PC-3 (cell line): ENCODE measurements at regions of chr7 and their contacts with region 1.

Region 1: GRCh38 chr7:19713676-19714075 is 4.8 kb upstream of the POLR1F start:
- DNase-seq: peak; percentile 82
- ATAC-seq: 0 out of 2 replicates have a peak, but pooled peaks have one; percentile 31
- H3K4me3 ChIP-seq: no peak overlapping the region
- H3K27ac ChIP-seq: no peak overlapping the region
- H3K4me1 ChIP-seq: peaks cover 5% of the 10 kb centered on the region; the same call in 1 of the 2 replicates
- H3K27me3 ChIP-seq: no peaks in the 10 kb centered on the region
- CTCF ChIP-seq: peak; percentile 78

Region 2: GRCh38 chr7:20172736-20173334 is 459.2 kb after region 1 on chr7:
- CTCF ChIA-PET with region 1: interaction called, 7 read pairs
- POLR2A ChIA-PET with region 1: no interaction called
- intact Hi-C with region 1: loop called (anchors 1 kb)
- DNase-seq: peak; percentile 74
- ATAC-seq: peak; percentile 99
- H3K4me3 ChIP-seq: no peak overlapping the region
- H3K27ac ChIP-seq: no peak overlapping the region
- H3K4me1 ChIP-seq: no peaks in the 10 kb centered on the region
- H3K27me3 ChIP-seq: no peaks in the 10 kb centered on the region
- CTCF ChIP-seq: peak; percentile 77

Region 3: GRCh38 chr7:20393021-20393610 is 679.4 kb after region 1 on chr7:
- CTCF ChIA-PET with region 1: interaction called, 5 read pairs
- POLR2A ChIA-PET with region 1: no interaction called
- intact Hi-C with region 1: loop called (anchors 5 kb)
- DNase-seq: peak; percentile 74
- ATAC-seq: peak; percentile 81
- H3K4me3 ChIP-seq: peak overlapping the region; percentile 40
- H3K27ac ChIP-seq: peak overlapping the region; percentile 97
- H3K4me1 ChIP-seq: peaks cover 49% of the 10 kb centered on the region
- H3K27me3 ChIP-seq: no peaks in the 10 kb centered on the region
- CTCF ChIP-seq: no peak

Region 4: DNA sequence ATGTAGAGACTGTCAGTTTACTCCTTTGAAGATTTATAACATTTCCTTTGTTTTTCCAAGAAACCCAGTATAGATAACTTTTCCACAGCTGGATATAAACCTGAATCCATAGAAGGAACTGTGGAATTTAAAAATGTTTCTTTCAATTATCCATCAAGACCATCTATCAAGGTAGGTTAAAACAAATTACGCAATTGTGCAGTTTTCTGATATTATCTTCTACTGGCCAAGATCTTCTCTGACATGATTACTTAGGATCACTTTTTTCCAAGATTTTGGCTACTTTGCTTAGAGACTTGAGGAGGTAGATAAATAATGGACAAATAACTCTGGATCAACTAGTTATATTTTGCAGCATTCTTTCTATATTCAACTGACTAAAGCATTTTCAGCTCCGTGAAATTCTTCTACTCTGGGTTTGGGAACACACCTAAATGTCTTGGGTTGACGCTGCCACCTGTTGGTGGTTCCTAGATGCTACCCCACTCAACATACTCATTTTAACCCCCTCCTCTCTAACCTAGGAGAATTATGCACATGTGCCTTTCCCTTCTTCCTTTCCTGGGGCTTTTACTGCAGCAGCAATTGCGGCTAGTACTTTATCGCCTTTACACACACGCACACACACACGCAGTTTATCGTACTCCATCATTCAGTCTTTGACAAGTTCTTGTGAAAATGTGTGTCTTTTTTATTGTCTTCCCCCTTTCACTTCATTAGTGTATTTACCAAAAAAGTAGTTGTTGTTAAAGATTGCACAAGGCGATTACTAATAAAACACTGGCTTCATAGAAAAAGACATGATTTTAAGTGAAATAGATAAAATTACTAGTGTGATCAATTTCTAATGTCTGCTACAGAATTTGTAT is 934.5 kb after region 1 on chr7:
- CTCF ChIA-PET with region 1: interaction called, 11 read pairs
- POLR2A ChIA-PET with region 1: interaction called, 3 read pairs
- intact Hi-C with region 1: loop called (anchors 1 kb)
- DNase-seq: peak; percentile 70
- ATAC-seq: peak; percentile 95
- H3K4me3 ChIP-seq: no peak overlapping the region
- H3K27ac ChIP-seq: no peak overlapping the region
- H3K4me1 ChIP-seq: no peaks in the 10 kb centered on the region
- H3K27me3 ChIP-seq: peaks cover 10% of the 10 kb centered on the region
- CTCF ChIP-seq: peak; percentile 81

Region 5: DNA sequence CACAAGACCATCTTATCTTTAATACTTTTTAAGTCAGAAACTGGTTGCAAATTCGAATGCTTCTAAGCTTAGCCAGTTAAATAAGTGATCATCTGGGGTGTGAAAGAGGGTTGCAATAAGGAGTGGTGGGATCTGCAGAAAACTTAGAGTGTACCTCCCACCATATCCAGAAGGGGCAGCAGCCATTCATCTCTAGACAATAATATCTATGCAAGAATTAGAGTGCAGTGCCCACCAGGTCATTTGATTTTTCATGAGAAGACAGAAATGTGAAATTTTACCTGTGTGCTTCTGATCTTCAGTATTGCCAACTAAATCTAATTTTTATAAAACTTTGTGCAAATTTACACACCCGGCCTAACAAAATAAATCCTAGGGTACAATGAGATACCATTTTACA is 1587.0 kb after region 1 on chr7:
- CTCF ChIA-PET with region 1: interaction called, 11 read pairs
- POLR2A ChIA-PET with region 1: no interaction called
- intact Hi-C with region 1: no loop called
- DNase-seq: peak; percentile 3
- ATAC-seq: no peak
- H3K4me3 ChIP-seq: no peak overlapping the region
- H3K27ac ChIP-seq: no peak overlapping the region
- H3K4me1 ChIP-seq: no peaks in the 10 kb centered on the region
- H3K27me3 ChIP-seq: peaks cover 20% of the 10 kb centered on the region
- CTCF ChIP-seq: peak; percentile 59